GM12878 (cell line): ENCODE measurements at regions of chr14 and their contacts with region 1.

Region 1: GRCh38 chr14:22852940-22853767 is 16.8 kb downstream of the MMP14 start:
- DNase-seq: peak; percentile 63
- ATAC-seq: peak; percentile 95
- H3K4me3 ChIP-seq: peak overlapping the region; percentile 75
- H3K27ac ChIP-seq: peak overlapping the region; percentile 89
- H3K4me1 ChIP-seq: peaks cover 17% of the 10 kb centered on the region
- H3K27me3 ChIP-seq: no peaks in the 10 kb centered on the region
- CTCF ChIP-seq: peak; percentile 85 to 98 (median 93)
- EP300 ChIP-seq: no peak
- POLR2A ChIP-seq: no peak
- RAD21 ChIP-seq: peak; percentile 98

Region 2: DNA sequence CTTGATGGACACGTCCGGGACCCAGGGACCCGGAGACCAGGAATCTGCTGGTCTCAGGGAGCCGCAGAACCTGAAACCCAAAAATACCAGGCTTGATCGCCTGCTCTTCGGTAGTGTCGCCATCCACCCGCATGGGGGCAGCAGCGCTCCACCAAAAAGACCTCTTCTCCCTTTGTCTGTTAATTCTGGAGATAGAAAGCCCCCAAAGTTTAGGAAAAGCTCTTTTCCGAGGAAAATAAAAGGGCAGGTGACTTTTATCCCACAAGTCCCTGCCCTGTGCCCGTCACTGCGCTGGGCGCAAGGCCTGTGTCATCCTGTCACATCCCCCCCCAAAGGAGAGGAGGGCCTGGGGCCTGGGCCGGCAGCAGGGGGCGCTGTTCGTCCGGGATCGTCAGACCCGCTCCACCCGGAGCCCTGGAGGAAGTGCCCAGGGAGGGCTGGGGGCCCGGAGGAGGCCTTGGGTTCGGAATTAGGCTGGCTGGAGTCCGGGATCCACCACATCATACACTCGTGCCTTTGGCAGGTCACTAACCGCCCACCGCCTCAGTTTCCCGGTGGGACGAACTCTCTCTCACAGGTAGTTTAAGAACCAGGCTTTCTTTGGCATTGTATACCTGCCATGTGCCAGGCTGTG is 296.0 kb before region 1 on chr14:
- CTCF ChIA-PET with region 1: interaction called, 23 read pairs
- POLR2A ChIA-PET with region 1: no interaction called
- RAD21 ChIA-PET with region 1: interaction called, 8 read pairs
- SMC1A ChIA-PET with region 1: interaction called, 6 read pairs
- in situ Hi-C with region 1: no loop called
- intact Hi-C with region 1: loop called (anchors 5 kb)
- DNase-seq: no peak
- ATAC-seq: peak; percentile 58
- H3K4me3 ChIP-seq: peak overlapping the region; percentile 51; the same call in 1 of the 2 replicates
- H3K27ac ChIP-seq: peak overlapping the region; percentile 100
- H3K4me1 ChIP-seq: peaks cover 73% of the 10 kb centered on the region
- H3K27me3 ChIP-seq: no peaks in the 10 kb centered on the region
- CTCF ChIP-seq: peak; percentile 66 to 93 (median 86)
- EP300 ChIP-seq: no peak
- POLR2A ChIP-seq: peak; percentile 5; the same call in 1 of the 2 replicates
- RAD21 ChIP-seq: peak; percentile 74

Region 3: GRCh38 chr14:22668417-22668816 is 184.7 kb before region 1 on chr14:
- CTCF ChIA-PET with region 1: no interaction called
- POLR2A ChIA-PET with region 1: no interaction called
- RAD21 ChIA-PET with region 1: no interaction called
- SMC1A ChIA-PET with region 1: no interaction called
- in situ Hi-C with region 1: loop called (anchors 5 kb)
- intact Hi-C with region 1: no loop called
- DNase-seq: no peak
- ATAC-seq: peak; percentile 79
- H3K4me3 ChIP-seq: no peak overlapping the region
- H3K27ac ChIP-seq: no peak overlapping the region
- H3K4me1 ChIP-seq: no peaks in the 10 kb centered on the region
- H3K27me3 ChIP-seq: no peaks in the 10 kb centered on the region
- CTCF ChIP-seq: no peak
- EP300 ChIP-seq: no peak
- POLR2A ChIP-seq: no peak
- RAD21 ChIP-seq: no peak

Region 4: DNA sequence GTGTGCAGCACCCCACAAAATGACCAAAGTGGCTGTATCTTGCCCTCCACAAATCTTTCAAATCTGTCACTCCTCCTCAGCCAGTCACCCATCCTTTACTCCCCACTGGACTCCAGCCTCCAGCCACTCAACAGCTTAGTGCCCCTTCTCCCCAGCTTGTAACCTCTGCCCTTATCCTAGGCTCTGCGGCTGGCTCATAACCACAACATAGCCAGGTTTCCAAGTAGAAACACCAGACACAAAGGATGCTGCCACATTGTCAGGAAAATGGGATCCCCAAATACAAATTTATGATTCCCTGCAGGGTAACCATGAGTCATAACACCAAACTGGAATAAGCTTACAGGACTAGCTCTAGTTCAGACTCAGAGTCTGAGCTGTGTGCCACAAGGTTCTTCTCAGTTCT is 71.6 kb before region 1 on chr14:
- CTCF ChIA-PET with region 1: interaction called, 92 read pairs
- POLR2A ChIA-PET with region 1: no interaction called
- RAD21 ChIA-PET with region 1: interaction called, 51 read pairs
- SMC1A ChIA-PET with region 1: interaction called, 84 read pairs
- in situ Hi-C with region 1: loop called (anchors 5 kb)
- intact Hi-C with region 1: loop called (anchors 1 kb)
- DNase-seq: no peak
- ATAC-seq: no peak
- H3K4me3 ChIP-seq: no peak overlapping the region
- H3K27ac ChIP-seq: no peak overlapping the region
- H3K4me1 ChIP-seq: peaks cover 13% of the 10 kb centered on the region
- H3K27me3 ChIP-seq: no peaks in the 10 kb centered on the region
- CTCF ChIP-seq: no peak
- EP300 ChIP-seq: no peak
- POLR2A ChIP-seq: no peak
- RAD21 ChIP-seq: no peak

Region 5: DNA sequence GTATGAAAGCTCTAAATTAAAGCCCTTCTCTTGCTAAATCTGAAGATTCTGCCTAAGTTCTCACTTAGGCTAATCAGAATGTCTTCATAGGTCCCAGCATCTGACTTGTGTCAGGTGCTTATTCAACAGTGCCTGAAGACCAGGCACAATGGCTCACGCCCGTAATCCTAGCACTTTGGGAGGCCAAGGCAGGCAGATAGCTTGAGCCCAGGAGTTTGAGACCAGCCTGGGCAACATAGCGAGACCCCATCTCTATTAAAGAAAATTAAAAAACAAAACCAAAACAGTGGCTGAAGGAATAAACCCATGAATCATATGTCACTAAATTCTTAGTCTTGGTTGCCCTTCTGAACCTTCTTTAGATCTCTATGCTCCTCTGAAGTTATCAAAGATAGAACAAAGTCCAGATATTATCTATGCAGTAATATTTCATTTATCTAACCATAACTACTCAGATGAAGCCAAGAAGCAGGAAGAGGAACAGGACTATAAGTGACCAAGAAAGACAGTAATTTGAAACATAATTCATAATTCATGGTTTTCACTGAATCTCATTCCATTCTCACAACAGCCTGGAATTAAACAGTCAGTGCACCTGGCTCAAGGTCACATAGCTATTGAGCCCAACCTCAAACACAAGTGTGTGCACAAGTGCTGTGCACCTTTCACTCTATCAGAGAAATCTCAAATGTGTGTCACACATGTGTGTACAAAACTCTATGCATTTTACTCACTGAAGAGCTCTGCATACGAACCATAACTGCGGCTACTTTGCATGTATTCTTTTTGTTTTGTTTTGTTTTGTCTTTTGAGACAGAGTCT is 44.6 kb before region 1 on chr14:
- CTCF ChIA-PET with region 1: interaction called, 324 read pairs
- POLR2A ChIA-PET with region 1: interaction called, 6 read pairs
- RAD21 ChIA-PET with region 1: interaction called, 10 read pairs
- SMC1A ChIA-PET with region 1: interaction called, 9 read pairs
- in situ Hi-C with region 1: no loop called
- intact Hi-C with region 1: no loop called
- DNase-seq: no peak
- ATAC-seq: no peak
- H3K4me3 ChIP-seq: peak overlapping the region; percentile 13; the same call in 1 of the 2 replicates
- H3K27ac ChIP-seq: peak overlapping the region; percentile 30
- H3K4me1 ChIP-seq: peaks cover 43% of the 10 kb centered on the region
- H3K27me3 ChIP-seq: no peaks in the 10 kb centered on the region
- CTCF ChIP-seq: no peak
- EP300 ChIP-seq: no peak
- POLR2A ChIP-seq: no peak
- RAD21 ChIP-seq: no peak

Region 6: DNA sequence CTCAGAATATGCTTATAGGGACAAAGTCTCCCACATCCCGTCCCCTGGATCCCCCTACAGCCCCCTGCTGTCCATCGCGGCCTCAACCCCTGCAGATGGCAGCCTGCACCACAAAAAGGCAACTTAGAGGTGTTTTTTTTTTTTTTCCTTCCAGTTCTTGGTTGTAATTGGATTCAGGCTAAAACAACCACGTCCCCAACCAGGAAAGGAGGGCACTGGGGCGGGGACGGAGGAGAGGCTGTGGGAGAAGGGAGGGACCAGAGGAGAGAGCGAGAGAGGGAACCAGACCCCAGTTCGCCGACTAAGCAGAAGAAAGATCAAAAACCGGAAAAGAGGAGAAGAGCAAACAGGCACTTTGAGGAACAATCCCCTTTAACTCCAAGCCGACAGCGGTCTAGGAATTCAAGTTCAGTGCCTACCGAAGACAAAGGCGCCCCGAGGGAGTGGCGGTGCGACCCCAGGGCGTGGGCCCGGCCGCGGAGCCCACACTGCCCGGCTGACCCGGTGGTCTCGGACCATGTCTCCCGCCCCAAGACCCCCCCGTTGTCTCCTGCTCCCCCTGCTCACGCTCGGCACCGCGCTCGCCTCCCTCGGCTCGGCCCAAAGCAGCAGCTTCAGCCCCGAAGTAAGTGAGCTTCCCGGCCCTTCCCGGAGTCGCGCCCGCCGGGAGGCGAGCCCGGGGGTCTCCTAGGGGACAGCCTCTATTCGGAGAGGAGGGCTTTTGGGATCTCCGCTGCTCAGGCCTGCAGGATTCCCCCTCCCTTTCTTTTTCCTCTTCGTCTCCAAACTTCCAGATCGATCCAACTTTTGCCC is 16.6 kb before region 1 on chr14 and contains the start of gene MMP14:
- CTCF ChIA-PET with region 1: interaction called, 55 read pairs
- POLR2A ChIA-PET with region 1: no interaction called
- RAD21 ChIA-PET with region 1: interaction called, 8 read pairs
- SMC1A ChIA-PET with region 1: interaction called, 5 read pairs
- in situ Hi-C with region 1: no loop called
- intact Hi-C with region 1: no loop called
- DNase-seq: no peak
- ATAC-seq: no peak
- H3K4me3 ChIP-seq: no peak within 1 kb of the TSS
- H3K27ac ChIP-seq: no peak within 1 kb of the TSS
- H3K4me1 ChIP-seq: peaks cover 21% of the 10 kb centered on the region
- H3K27me3 ChIP-seq: no peaks in the 10 kb centered on the region
- CTCF ChIP-seq: no peak
- EP300 ChIP-seq: no peak
- POLR2A ChIP-seq: 0 out of 2 replicates have a peak, but pooled peaks have one; percentile 23
- RAD21 ChIP-seq: no peak
- polyA plus RNA-seq, gene MMP14: not detected

Region 7: DNA sequence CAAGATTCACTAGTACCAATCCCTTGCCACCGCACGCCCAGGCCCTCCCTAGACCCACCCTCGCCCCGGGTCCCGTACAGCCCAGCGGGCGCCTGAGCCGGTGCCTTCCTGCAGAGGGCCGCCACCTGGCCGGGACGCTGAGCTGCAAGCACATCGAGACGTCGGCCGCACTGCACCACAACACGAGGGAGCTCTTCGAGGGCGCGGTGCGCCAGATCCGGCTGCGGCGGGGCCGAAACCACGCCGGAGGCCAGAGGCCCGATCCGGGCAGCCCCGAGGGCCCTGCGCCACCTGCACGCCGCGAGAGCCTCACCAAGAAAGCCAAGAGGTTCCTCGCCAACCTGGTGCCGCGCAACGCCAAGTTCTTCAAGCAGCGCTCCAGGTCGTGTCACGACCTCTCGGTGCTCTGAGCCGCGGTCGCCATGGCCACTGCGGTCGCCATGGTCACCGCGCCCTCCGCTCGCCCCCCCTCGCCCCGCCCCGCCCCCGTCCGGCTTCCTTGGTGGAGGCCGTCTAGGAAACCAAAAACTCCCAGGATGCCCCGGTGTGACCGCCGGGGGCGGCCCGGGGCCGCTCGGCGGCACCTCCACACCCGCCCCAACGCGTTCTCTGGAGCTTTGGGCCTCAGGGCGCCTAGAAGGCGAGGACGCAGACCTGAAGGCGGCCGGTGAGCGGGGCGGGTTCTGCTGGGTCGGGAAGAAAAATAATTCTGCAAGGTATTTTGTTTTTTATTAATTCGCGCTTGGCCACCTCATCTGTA is 33.5 kb after region 1 on chr14:
- CTCF ChIA-PET with region 1: interaction called, 21 read pairs
- POLR2A ChIA-PET with region 1: interaction called, 5 read pairs
- RAD21 ChIA-PET with region 1: interaction called, 5 read pairs
- SMC1A ChIA-PET with region 1: interaction called, 12 read pairs
- in situ Hi-C with region 1: no loop called
- intact Hi-C with region 1: no loop called
- DNase-seq: peak; percentile 45
- ATAC-seq: peak; percentile 72
- H3K4me3 ChIP-seq: peak overlapping the region; percentile 91
- H3K27ac ChIP-seq: peak overlapping the region; percentile 86
- H3K4me1 ChIP-seq: peaks cover 35% of the 10 kb centered on the region
- H3K27me3 ChIP-seq: no peaks in the 10 kb centered on the region
- CTCF ChIP-seq: peak; percentile 13 to 46 (median 18); a peak in 4 of 6 replicates
- EP300 ChIP-seq: no peak; a peak in 1 of 4 replicates
- POLR2A ChIP-seq: peak; percentile 79; the same call in 1 of the 2 replicates
- RAD21 ChIP-seq: no peak